GM18951 (cell line): ENCODE measurements at regions of chr6 and their contacts with region 1.

Region 1: DNA sequence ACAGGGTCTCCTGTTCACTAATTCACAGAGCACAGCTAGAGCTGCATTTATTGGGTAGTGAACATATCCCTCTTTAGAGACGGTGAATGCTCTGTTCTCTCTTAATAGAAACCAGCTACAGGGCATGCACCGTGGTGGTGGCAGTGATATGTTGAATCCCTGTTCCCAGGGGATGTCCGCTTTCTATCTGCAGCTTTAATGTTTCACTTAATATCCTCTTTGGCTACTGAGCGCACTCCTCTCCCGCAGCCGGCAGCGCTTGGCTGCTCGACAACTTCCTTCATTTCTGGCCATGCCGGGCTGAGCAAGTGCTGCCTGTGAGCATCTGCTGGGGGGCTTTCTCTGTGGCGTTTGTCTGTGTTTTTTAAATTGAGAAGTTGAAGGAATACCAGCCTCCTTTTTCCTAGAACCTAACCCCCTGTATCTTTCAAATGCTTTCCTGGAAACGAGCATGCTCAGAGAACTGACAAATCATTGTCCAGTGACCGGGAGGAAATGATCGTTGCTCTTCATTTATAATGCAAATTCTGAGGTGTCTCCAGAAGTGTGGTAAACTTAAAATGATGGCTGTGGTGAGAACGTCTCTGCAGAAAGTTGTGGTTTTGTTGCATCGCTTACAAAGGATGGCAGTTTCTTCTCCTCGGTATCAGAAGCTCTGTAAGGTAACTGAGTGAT is 297.9 kb downstream of the UTRN start:
- POLR2A ChIP-seq: no peak

Region 2: GRCh38 chr6:144150710-144151657 is 432.1 kb before region 1 on chr6:
- in situ Hi-C with region 1: no loop called
- POLR2A ChIP-seq: peak; percentile 62

Region 3: DNA sequence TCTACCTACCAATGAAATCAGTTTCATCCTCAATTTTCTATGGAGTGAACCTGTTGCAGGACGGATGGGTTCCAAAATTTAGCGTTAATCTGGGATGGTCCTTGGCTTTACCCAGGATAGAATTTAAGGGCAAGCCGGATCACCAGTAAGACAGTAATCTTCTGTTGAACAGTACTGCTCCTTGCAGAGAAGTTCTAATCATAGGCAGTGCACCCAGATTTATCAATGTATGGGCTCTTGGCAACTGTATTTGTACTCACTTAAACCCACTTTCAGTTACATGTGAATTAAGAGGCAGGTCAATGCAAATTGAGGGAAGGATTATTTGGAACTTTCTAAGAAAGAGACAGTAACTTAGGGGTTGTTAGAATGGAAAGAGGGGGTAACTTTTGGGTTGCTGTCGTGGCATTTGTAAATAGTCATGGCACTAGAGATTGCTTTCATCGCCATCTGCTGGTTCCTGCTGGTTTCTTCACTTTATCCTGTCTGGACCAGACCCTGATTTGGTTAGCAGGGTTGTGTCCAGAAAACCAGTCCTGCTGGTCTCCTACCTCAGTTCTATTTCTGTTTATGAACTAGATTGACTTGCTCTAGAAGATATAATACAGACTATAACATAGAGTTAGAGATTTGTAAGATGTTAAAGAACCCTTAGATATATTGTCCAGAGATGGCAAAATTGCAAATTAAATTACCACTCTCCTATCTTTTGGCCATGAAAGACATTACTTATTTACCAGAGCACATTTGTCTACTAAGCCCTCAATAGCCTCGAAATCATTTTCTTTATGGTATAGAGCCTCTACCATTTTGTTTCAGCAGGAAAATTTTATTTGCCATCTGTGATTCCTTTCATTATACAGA is 348.3 kb after region 1 on chr6:
- in situ Hi-C with region 1: loop called (anchors 25 kb)
- POLR2A ChIP-seq: no peak

Region 4: GRCh38 chr6:145214570-145214969 is 631.5 kb after region 1 on chr6:
- in situ Hi-C with region 1: loop called (anchors 25 kb)
- POLR2A ChIP-seq: no peak